ENCODE measurements at regions of chr6 and their contacts with region 1.

Region 1: GRCh38 chr6:160041608-160042007 is 72.7 kb downstream of the IGF2R start:
- DNase-seq: peak; percentile 82
- H3K4me3 ChIP-seq: no peak overlapping the region
- H3K27ac ChIP-seq: peak overlapping the region; percentile 65
- H3K4me1 ChIP-seq: peaks cover 44% of the 10 kb centered on the region
- H3K27me3 ChIP-seq: no peaks in the 10 kb centered on the region
- CTCF ChIP-seq: peak; percentile 42 to 56

Region 2: GRCh38 chr6:159968440-159969203 is 73.0 kb before region 1 on chr6 and contains the start of gene IGF2R:
- CTCF ChIA-PET with region 1: interaction called, 3 read pairs
- dilution Hi-C with region 1: no loop called
- in situ Hi-C with region 1: no loop called
- intact Hi-C with region 1: loop called (anchors 2 kb)
- DNase-seq: peak; percentile 86
- H3K4me3 ChIP-seq: peak within 1 kb of the TSS; percentile 70 to 88 (median 77)
- H3K27ac ChIP-seq: peak within 1 kb of the TSS; percentile 92
- H3K4me1 ChIP-seq: peaks cover 35% of the 10 kb centered on the region
- H3K27me3 ChIP-seq: no peaks in the 10 kb centered on the region
- CTCF ChIP-seq: no peak
- total RNA-seq, gene IGF2R: 120 to 171 TPM